Caki2 (cell line): ENCODE measurements at regions of chr6 and their contacts with region 1.

Region 1: GRCh38 chr6:89432875-89433251 is at the start of gene ANKRD6:
- DNase-seq: peak; percentile 69
- total RNA-seq, gene ANKRD6: 12.5 and 16.9 TPM in 2 replicates

Region 2: DNA sequence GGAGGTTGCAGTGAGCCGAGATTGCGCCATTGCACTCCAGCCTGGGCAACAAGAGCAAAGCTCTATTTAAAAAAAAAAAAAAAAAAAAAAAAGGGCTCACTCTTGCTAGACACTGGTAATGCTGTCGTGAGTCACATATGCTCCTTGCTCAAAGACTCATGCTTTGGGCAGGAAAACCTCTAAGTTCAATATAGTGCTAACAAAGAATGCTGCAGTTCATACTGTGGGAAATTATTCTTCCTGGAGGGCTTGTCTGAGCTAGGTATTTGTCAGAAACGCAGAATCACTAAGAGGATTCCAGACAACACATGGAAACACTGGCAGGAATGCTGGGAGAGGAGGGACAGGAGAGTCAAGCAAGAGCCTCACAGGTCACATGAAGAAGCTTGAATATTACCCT is 207.9 kb after region 1 on chr6:
- in situ Hi-C with region 1: loop called (anchors 10 kb)
- DNase-seq: no peak